Calu3 (cell line): ENCODE measurements at regions of chr12 and their contacts with region 1.

Region 1: GRCh38 chr12:124453419-124454351 is 113.7 kb downstream of the NCOR2 start:
- DNase-seq: peak; percentile 94
- H3K4me3 Mint-ChIP-seq: peak overlapping the region; percentile 46
- H3K27ac Mint-ChIP-seq: peak overlapping the region; percentile 76
- H3K4me1 Mint-ChIP-seq: peaks cover 17% of the 10 kb centered on the region
- H3K27me3 Mint-ChIP-seq: no peaks in the 10 kb centered on the region
- CTCF ChIP-seq: no peak

Region 2: GRCh38 chr12:124506145-124506831 is 52.6 kb after region 1 on chr12:
- CTCF ChIA-PET with region 1: interaction called, 8 read pairs
- intact Hi-C with region 1: loop called (anchors 5 kb)
- DNase-seq: peak; percentile 71
- H3K4me3 Mint-ChIP-seq: peak overlapping the region; percentile 56
- H3K27ac Mint-ChIP-seq: peak overlapping the region; percentile 82
- H3K4me1 Mint-ChIP-seq: peaks cover 73% of the 10 kb centered on the region
- H3K27me3 Mint-ChIP-seq: no peaks in the 10 kb centered on the region
- CTCF ChIP-seq: no peak

Region 3: GRCh38 chr12:125208942-125209341 is 755.3 kb after region 1 on chr12:
- CTCF ChIA-PET with region 1: no interaction called
- intact Hi-C with region 1: no loop called
- DNase-seq: no peak
- H3K4me3 Mint-ChIP-seq: no peak overlapping the region
- H3K27ac Mint-ChIP-seq: no peak overlapping the region
- H3K4me1 Mint-ChIP-seq: no peaks in the 10 kb centered on the region
- H3K27me3 Mint-ChIP-seq: peaks cover 87% of the 10 kb centered on the region
- CTCF ChIP-seq: no peak